ENCODE measurements at regions of chr5 and their contacts with region 1.

Region 1: DNA sequence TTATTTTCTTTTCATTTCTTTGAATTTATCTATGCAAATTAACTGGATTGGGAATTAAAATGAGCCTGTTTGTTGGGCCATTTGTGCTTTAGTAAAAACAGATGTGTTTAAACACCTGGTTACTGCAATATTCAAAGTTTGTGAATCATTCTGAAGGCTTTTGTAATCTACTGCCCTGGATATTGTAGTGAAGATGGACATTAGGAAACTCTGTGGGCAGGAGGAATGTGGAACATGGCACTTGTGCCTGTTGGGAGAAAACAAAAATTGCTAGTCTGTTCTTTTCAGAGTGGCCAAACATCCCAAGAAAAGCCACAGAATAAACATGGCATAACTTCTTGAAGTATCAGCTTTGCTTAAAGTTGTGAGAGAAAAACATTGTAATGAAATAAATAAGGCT is 40.8 kb downstream of the CHSY3 start:
- DNase-seq: no peak
- H3K4me3 ChIP-seq: no peak overlapping the region
- H3K27ac ChIP-seq: peak overlapping the region; percentile 54 to 62
- H3K4me1 ChIP-seq: peaks cover 0 to 13% of the 10 kb centered on the region in 2 donors
- H3K27me3 ChIP-seq: no peaks in the 10 kb centered on the region
- CTCF ChIP-seq: no peak

Region 2: GRCh38 chr5:129973716-129974426 is 28.8 kb after region 1 on chr5:
- intact Hi-C with region 1: no loop called
- DNase-seq: no peak
- H3K4me3 ChIP-seq: no peak overlapping the region
- H3K27ac ChIP-seq: no peak overlapping the region
- H3K4me1 ChIP-seq: no peaks in the 10 kb centered on the region
- H3K27me3 ChIP-seq: no peaks in the 10 kb centered on the region
- CTCF ChIP-seq: no peak

Region 3: DNA sequence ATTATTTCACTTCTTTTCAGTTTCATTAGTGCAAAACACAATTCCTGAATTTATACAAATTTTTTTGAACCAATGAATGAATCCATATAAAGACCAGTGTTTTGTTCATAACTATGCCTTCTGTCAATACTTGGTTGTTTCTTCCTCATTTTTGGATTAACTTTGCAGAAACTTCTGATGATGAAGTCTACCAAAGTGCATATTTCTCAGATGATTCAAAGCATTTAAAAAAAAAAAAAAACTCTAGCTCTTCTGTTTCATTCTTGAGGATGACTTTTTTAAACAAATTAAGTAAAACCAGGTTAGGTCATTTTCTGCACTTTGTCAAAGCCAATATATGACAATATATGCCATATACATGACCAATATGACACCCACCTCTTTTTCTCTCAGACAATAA is 51.9 kb after region 1 on chr5:
- intact Hi-C with region 1: loop called (anchors 1 kb)
- DNase-seq: no peak
- H3K4me3 ChIP-seq: no peak overlapping the region
- H3K27ac ChIP-seq: no peak overlapping the region
- H3K4me1 ChIP-seq: no peaks in the 10 kb centered on the region
- H3K27me3 ChIP-seq: no peaks in the 10 kb centered on the region
- CTCF ChIP-seq: no peak

Region 4: DNA sequence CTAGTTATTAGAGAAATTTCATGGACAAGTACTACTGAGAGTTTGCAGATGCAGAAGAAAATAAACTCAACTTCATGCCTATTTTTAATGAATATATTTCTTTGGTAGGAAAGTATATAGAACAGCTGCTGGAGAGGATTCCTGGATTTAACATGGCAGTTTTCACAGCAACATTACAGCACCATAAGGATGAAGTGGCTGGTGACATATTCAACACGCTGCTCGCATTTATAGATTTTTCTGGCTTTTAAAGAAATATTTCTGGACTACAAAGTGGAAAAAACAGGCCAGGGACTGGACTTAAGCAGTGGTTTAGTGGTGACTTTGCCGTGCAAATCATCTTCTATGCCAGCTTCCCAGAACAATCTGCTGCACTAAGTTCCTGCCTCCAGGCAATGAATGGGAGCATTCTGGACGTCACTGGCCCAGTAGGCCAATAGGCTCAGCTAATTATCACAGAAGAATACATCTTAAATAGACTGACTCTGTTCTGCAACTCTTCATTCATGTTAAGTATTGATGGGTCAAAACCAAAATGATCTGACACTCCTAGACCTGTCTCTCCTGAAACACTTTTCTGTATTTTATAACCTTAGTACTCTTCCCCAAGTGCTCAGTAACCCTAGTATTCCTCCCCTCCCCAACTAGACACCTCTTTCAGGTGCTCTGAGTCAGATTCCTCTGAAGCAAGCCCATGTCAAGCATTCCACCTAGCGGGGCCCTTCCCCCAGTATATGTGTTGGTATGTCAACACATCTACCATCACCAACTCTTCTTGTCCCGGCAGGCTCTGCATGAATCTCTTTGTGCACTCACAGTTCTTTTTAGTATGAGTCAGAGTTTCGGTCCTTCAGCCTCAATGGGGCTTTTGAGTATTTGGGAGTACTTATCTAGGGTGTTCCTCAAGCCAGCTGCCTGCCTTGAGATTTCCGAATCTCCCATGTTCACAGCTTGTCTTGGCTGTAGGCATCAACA is 584.8 kb after region 1 on chr5:
- intact Hi-C with region 1: no loop called
- DNase-seq: no peak
- H3K4me3 ChIP-seq: no peak overlapping the region
- H3K27ac ChIP-seq: no peak overlapping the region
- H3K4me1 ChIP-seq: no peaks in the 10 kb centered on the region
- H3K27me3 ChIP-seq: no peaks in the 10 kb centered on the region
- CTCF ChIP-seq: no peak

Measured in ascending aorta (tissue), 2 donors.